SK-N-SH (cell line): ENCODE measurements at regions of chr16 and their contacts with region 1.

Region 1: GRCh38 chr16:85114909-85115567 is 2.8 kb upstream of the CIBAR2 start:
- DNase-seq: peak; percentile 92
- H3K4me3 ChIP-seq: peak overlapping the region in 1 of 2 experiments; percentile 39; a peak in 1 of 4 replicates
- H3K27ac ChIP-seq: peak overlapping the region; percentile 45 to 61; a peak in 3 of 4 replicates
- H3K4me1 ChIP-seq: peaks cover 0 to 11% of the 10 kb centered on the region in 2 experiments; a peak in 2 of 4 replicates
- H3K27me3 ChIP-seq: no peaks in the 10 kb centered on the region
- CTCF ChIP-seq: peak; percentile 98
- EP300 ChIP-seq: no peak
- RAD21 ChIP-seq: peak; percentile 99

Region 2: GRCh38 chr16:85086347-85087291 is 28.4 kb before region 1 on chr16:
- CTCF ChIA-PET with region 1: interaction called, 12 read pairs
- POLR2A ChIA-PET with region 1: no interaction called
- DNase-seq: peak; percentile 83
- H3K4me3 ChIP-seq: no peak overlapping the region; a peak in 1 of 4 replicates
- H3K27ac ChIP-seq: no peak overlapping the region
- H3K4me1 ChIP-seq: peaks cover 0 to 11% of the 10 kb centered on the region in 2 experiments; a peak in 1 of 4 replicates
- H3K27me3 ChIP-seq: no peaks in the 10 kb centered on the region
- CTCF ChIP-seq: peak; percentile 62
- EP300 ChIP-seq: no peak
- RAD21 ChIP-seq: peak; percentile 56

Region 3: DNA sequence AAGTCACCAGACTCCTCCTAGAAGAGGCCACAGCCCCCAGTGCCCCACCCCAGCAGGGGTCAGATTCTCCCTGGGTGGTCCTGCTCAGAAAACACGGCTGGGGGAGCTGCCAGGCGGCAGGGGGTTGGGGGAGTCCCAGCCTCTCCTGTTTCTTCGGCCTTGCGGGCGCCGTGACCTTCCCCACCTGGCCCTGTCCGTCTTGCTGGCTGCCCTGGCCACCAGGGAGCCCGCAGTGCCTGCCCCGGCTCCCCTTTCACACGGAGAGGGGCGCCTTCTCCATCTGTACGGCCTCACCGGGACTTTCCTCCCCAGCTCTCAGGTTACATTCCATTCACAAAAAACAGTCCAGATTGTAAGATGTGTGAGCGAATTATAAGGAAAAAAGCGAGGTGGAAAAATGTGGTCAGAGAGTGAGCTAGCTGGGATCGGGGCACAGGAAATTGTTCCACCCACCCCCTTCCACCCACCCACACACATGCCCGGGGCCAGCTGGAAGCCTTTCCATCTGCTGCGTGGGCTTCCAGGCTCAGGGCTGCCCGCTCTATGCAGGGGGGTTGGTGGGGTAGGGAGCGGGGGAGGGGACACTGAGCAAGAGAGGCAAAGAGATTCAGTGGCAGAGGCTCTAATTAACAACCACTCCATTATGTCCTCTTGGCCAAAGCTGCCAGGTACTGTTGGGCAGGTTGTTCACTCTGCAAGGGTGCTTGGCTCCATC is 11.8 kb after region 1 on chr16:
- CTCF ChIA-PET with region 1: interaction called, 48 read pairs
- POLR2A ChIA-PET with region 1: no interaction called
- DNase-seq: peak; percentile 87
- H3K4me3 ChIP-seq: no peak overlapping the region
- H3K27ac ChIP-seq: peak overlapping the region; percentile 54 to 64
- H3K4me1 ChIP-seq: peaks cover 17 to 22% of the 10 kb centered on the region in 2 experiments; a peak in 3 of 4 replicates
- H3K27me3 ChIP-seq: no peaks in the 10 kb centered on the region
- CTCF ChIP-seq: peak; percentile 10; the same call in 1 of the 2 replicates
- EP300 ChIP-seq: peak in 1 of 2 experiments; percentile 7; a peak in 1 of 4 replicates
- RAD21 ChIP-seq: no peak

Region 4: GRCh38 chr16:85162478-85163277 is 47.6 kb after region 1 on chr16:
- CTCF ChIA-PET with region 1: interaction called, 19 read pairs
- POLR2A ChIA-PET with region 1: no interaction called
- DNase-seq: peak; percentile 79
- H3K4me3 ChIP-seq: no peak overlapping the region
- H3K27ac ChIP-seq: peak overlapping the region; percentile 53 to 88
- H3K4me1 ChIP-seq: peaks cover 4 to 41% of the 10 kb centered on the region in 2 experiments
- H3K27me3 ChIP-seq: no peaks in the 10 kb centered on the region
- CTCF ChIP-seq: no peak
- EP300 ChIP-seq: peak; percentile 46 to 77; a peak in 2 of 4 replicates
- RAD21 ChIP-seq: no peak

Region 5: DNA sequence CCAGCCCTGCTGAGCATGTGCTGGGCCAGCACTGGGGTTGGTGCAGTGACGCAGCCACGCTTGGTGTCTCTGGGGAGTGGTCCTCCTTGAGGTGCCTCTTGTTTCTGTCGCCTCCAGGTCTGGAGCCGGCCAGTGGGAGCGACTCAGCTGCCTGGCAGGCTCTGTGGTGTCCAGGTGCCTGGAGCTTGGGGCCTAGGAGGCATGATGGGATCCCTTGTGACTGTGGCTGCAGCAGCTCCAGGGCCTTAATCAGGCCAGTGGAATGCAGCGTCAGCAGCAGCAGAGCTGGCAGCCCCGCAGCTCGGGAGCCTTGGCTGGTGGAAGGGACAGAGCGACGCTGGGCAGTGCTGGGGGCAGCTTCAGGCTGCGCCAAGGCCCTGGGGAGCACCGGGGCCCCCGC is 72.0 kb after region 1 on chr16:
- CTCF ChIA-PET with region 1: interaction called, 13 read pairs
- POLR2A ChIA-PET with region 1: no interaction called
- DNase-seq: no peak
- H3K4me3 ChIP-seq: no peak overlapping the region
- H3K27ac ChIP-seq: peak overlapping the region in 1 of 2 experiments; percentile 64; a peak in 1 of 4 replicates
- H3K4me1 ChIP-seq: peaks cover 0 to 19% of the 10 kb centered on the region in 2 experiments; a peak in 1 of 4 replicates
- H3K27me3 ChIP-seq: no peaks in the 10 kb centered on the region
- CTCF ChIP-seq: no peak
- EP300 ChIP-seq: no peak; a peak in 1 of 4 replicates
- RAD21 ChIP-seq: no peak

Region 6: DNA sequence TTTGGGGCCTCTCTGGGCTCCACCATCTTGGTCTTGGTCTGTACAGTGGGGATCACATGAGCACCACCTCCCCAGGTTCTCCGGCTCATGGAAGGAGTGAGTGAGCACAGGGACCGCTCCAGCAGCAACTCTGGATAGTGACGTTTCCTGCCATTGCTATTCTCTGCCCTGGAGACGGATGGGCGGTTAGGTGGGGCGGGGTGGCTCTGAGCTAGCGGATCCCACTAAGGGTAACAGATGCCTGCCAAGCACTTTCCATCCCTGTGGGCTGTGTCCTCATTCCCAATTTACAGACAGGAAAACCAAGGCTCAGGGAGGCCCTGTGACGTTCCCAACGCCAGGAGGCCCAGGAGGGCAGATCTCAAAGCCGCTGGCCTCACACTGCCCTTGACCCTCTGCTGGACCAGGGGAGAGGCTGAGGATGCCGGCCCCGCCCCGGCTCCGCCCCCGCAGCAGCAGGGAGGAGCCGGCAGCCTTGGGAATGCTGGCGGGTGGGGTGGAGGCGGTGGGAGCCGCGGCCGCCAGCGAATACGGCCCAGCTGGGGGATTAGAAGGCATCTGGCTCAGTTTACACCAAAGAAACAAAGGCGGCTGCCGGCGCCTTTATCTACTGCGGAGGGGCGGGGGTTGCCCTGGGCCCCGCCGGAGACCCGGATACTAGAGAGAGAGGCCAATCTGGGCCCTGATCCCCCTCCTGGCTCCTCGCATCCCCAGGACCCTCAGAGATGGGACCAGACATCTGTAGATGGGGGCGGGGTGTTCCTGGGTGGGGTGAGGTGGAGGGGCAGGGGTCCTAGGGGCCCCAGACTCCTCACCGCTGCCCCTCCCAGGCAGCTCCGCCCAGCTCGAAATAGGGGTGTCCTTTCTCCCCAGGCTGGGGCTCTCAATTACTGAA is 119.5 kb after region 1 on chr16:
- CTCF ChIA-PET with region 1: interaction called, 32 read pairs
- POLR2A ChIA-PET with region 1: interaction called, 3 read pairs
- DNase-seq: peak; percentile 96
- H3K4me3 ChIP-seq: peak overlapping the region; percentile 44 to 61
- H3K27ac ChIP-seq: peak overlapping the region; percentile 60 to 90; a peak in 3 of 4 replicates
- H3K4me1 ChIP-seq: peaks cover 21 to 45% of the 10 kb centered on the region in 2 experiments; a peak in 3 of 4 replicates
- H3K27me3 ChIP-seq: no peaks in the 10 kb centered on the region
- CTCF ChIP-seq: no peak
- EP300 ChIP-seq: peak in 1 of 2 experiments; percentile 9; a peak in 1 of 4 replicates
- RAD21 ChIP-seq: no peak; the same call in 1 of the 2 replicates

Region 7: GRCh38 chr16:85262558-85263238 is 147.7 kb after region 1 on chr16:
- CTCF ChIA-PET with region 1: interaction called, 13 read pairs
- POLR2A ChIA-PET with region 1: interaction called, 3 read pairs
- DNase-seq: no peak
- H3K4me3 ChIP-seq: no peak overlapping the region
- H3K27ac ChIP-seq: no peak overlapping the region
- H3K4me1 ChIP-seq: peaks cover 0 to 57% of the 10 kb centered on the region in 2 experiments; a peak in 1 of 4 replicates
- H3K27me3 ChIP-seq: no peaks in the 10 kb centered on the region
- CTCF ChIP-seq: no peak
- EP300 ChIP-seq: no peak
- RAD21 ChIP-seq: no peak